ENCODE measurements at regions of chr9 and their contacts with region 1.

Region 1: GRCh38 chr9:20209391-20210340 is 412.6 kb downstream of the MLLT3 start:
- DNase-seq: peak; percentile 94
- ATAC-seq: peak; percentile 87
- H3K4me3 Mint-ChIP-seq: peak overlapping the region; percentile 24
- H3K27ac Mint-ChIP-seq: peak overlapping the region; percentile 93
- H3K4me1 Mint-ChIP-seq: peaks cover 40% of the 10 kb centered on the region
- H3K27me3 Mint-ChIP-seq: no peaks in the 10 kb centered on the region
- CTCF ChIP-seq: no peak

Region 2: DNA sequence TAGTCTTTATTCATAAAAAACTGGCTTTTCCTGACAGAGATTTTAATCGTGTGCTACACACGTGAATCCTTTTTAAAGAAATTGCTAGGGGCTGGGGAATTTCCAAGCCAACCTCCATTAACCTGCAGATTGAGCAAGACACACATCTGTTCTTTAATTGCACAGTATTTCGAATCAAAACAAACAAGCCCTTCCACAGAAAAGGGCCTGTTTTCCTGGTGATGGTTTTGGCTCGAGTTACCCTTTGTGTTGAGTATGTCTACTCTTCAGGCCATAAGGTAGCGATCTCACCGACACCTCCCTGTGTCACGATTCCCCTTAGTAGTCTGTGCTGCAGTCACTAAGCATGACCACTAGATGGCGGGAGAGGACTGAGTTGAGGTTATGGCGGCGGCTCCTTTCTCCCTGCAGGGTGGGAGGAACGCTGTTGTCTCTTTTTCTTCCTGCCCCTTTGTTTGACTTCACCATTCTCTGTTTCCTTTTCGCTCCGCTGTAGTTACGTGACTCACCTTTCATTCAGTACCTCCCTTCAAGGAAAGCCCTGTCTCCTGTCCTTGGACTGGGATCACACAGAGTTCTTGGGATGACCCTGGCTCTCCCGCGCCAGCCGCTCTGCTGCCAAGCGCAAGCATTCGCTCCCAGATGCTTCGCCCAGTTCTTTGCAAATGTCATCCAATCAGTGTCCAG is 283.7 kb before region 1 on chr9:
- CTCF ChIA-PET with region 1: interaction called, 4 read pairs
- POLR2A ChIA-PET with region 1: no interaction called
- intact Hi-C with region 1: loop called (anchors 5 kb)
- DNase-seq: peak; percentile 84
- ATAC-seq: peak; percentile 99
- H3K4me3 Mint-ChIP-seq: peak overlapping the region; percentile 58
- H3K27ac Mint-ChIP-seq: no peak overlapping the region
- H3K4me1 Mint-ChIP-seq: peaks cover 10% of the 10 kb centered on the region
- H3K27me3 Mint-ChIP-seq: peaks cover 13% of the 10 kb centered on the region
- CTCF ChIP-seq: peak; percentile 95

Region 3: GRCh38 chr9:19946441-19947109 is 263.1 kb before region 1 on chr9:
- CTCF ChIA-PET with region 1: interaction called, 10 read pairs
- POLR2A ChIA-PET with region 1: no interaction called
- intact Hi-C with region 1: no loop called
- DNase-seq: peak; percentile 35
- ATAC-seq: peak; percentile 85
- H3K4me3 Mint-ChIP-seq: no peak overlapping the region
- H3K27ac Mint-ChIP-seq: no peak overlapping the region
- H3K4me1 Mint-ChIP-seq: peaks cover 4% of the 10 kb centered on the region
- H3K27me3 Mint-ChIP-seq: peaks cover 7% of the 10 kb centered on the region
- CTCF ChIP-seq: peak; percentile 24

Region 4: GRCh38 chr9:19999491-20000057 is 210.1 kb before region 1 on chr9:
- CTCF ChIA-PET with region 1: interaction called, 3 read pairs
- POLR2A ChIA-PET with region 1: interaction called, 22 read pairs
- intact Hi-C with region 1: loop called (anchors 1 kb)
- DNase-seq: peak; percentile 86
- ATAC-seq: peak; percentile 95
- H3K4me3 Mint-ChIP-seq: no peak overlapping the region
- H3K27ac Mint-ChIP-seq: peak overlapping the region; percentile 99
- H3K4me1 Mint-ChIP-seq: peaks cover 43% of the 10 kb centered on the region
- H3K27me3 Mint-ChIP-seq: no peaks in the 10 kb centered on the region
- CTCF ChIP-seq: no peak

Region 5: GRCh38 chr9:20242510-20243189 is 33.0 kb after region 1 on chr9:
- CTCF ChIA-PET with region 1: interaction called, 10 read pairs
- POLR2A ChIA-PET with region 1: interaction called, 8 read pairs
- intact Hi-C with region 1: loop called (anchors 1 kb)
- DNase-seq: peak; percentile 69
- ATAC-seq: peak; percentile 93
- H3K4me3 Mint-ChIP-seq: peak overlapping the region; percentile 46
- H3K27ac Mint-ChIP-seq: peak overlapping the region; percentile 43
- H3K4me1 Mint-ChIP-seq: peaks cover 54% of the 10 kb centered on the region
- H3K27me3 Mint-ChIP-seq: peaks cover 4% of the 10 kb centered on the region
- CTCF ChIP-seq: no peak

Region 6: GRCh38 chr9:20319641-20320337 is 110.1 kb after region 1 on chr9:
- CTCF ChIA-PET with region 1: interaction called, 4 read pairs
- POLR2A ChIA-PET with region 1: interaction called, 19 read pairs
- intact Hi-C with region 1: loop called (anchors 2 kb)
- DNase-seq: peak; percentile 54
- ATAC-seq: peak; percentile 77
- H3K4me3 Mint-ChIP-seq: peak overlapping the region; percentile 2
- H3K27ac Mint-ChIP-seq: peak overlapping the region; percentile 81
- H3K4me1 Mint-ChIP-seq: peaks cover 87% of the 10 kb centered on the region
- H3K27me3 Mint-ChIP-seq: no peaks in the 10 kb centered on the region
- CTCF ChIP-seq: no peak

Measured in activated CD8-positive, alpha-beta T cell treated with anti-CD3 and anti-CD28 coated beads for 36 hours (primary cell).